Stomach (tissue), 19 donors: ENCODE measurements at regions of chr6 and their contacts with region 1.

Region 1: DNA sequence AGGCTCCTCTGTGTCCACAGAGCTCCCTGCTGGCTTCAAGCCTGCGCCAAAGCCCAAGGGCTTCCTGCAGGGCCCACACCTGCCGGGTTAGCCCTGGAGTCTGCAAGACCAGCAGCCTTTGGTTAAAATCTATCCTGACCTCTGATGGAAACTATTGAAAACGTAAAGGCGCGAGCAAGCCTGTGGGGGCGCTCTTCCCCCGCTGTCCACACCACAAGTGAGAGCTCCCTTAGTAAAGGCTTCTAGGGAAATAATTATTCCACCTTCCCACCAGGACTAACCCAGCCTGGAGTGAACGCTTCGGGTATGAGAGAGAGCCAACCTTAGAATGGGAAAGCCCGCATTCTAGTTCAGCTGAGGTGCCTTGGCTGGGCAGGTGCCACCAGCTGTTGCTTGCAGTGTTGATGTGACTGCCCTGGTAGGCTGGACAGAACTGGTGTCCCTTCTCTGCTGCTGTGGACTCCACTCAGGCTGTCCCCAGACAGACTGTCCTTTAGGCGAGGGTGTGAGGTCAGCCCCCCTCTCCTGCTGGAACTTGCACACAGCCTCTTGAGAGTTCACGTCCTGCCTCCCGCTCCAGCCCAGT is 68.7 kb downstream of the SYTL3 start:
- DNase-seq: peak; percentile 48 to 80
- H3K4me3 ChIP-seq: no peak overlapping the region
- H3K27ac ChIP-seq: peak overlapping the region in 4 of 5 donors; percentile 12 to 49 (median 30)
- H3K4me1 ChIP-seq: peaks cover 0 to 25% (median 3%) of the 10 kb centered on the region in 4 donors
- H3K27me3 ChIP-seq: no peaks in the 10 kb centered on the region
- CTCF ChIP-seq: peak in 5 of 7 experiments; percentile 16 to 45 (median 43)
- EP300 ChIP-seq: no peak
- POLR2A ChIP-seq: no peak

Region 2: DNA sequence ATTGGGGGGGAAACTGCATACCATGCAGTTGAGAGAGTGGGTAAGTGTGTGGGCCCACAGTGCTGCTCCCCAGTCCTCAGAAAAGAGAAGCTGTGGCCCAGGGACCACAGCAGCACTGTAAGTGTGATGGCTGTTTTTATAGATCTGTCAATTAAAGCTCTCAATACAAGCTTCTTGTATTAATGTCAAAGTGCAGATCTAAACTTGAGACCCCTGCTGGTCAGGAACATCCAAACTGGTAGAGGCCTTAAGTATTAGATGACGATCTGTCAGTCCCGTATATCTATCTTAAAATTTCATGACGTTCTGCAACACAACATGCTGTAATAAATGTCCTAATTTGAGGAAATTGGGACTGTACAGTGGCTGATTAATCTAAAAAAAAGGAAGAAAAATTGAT is 331.5 kb before region 1 on chr6:
- intact Hi-C with region 1: no loop called
- DNase-seq: no peak
- H3K4me3 ChIP-seq: no peak overlapping the region
- H3K27ac ChIP-seq: no peak overlapping the region
- H3K4me1 ChIP-seq: peaks cover 0 to 3% (median 0%) of the 10 kb centered on the region in 4 donors
- H3K27me3 ChIP-seq: no peaks in the 10 kb centered on the region
- CTCF ChIP-seq: no peak
- EP300 ChIP-seq: no peak
- POLR2A ChIP-seq: no peak

Region 3: GRCh38 chr6:158481690-158482473 is 236.7 kb before region 1 on chr6:
- intact Hi-C with region 1: no loop called
- DNase-seq: no peak
- H3K4me3 ChIP-seq: no peak overlapping the region
- H3K27ac ChIP-seq: no peak overlapping the region
- H3K4me1 ChIP-seq: no peaks in the 10 kb centered on the region
- H3K27me3 ChIP-seq: no peaks in the 10 kb centered on the region
- CTCF ChIP-seq: no peak
- EP300 ChIP-seq: no peak
- POLR2A ChIP-seq: no peak

Region 4: GRCh38 chr6:158584236-158584651 is 134.3 kb before region 1 on chr6:
- intact Hi-C with region 1: no loop called
- DNase-seq: no peak
- H3K4me3 ChIP-seq: no peak overlapping the region
- H3K27ac ChIP-seq: no peak overlapping the region
- H3K4me1 ChIP-seq: no peaks in the 10 kb centered on the region
- H3K27me3 ChIP-seq: no peaks in the 10 kb centered on the region
- CTCF ChIP-seq: no peak
- EP300 ChIP-seq: no peak
- POLR2A ChIP-seq: no peak

Region 5: DNA sequence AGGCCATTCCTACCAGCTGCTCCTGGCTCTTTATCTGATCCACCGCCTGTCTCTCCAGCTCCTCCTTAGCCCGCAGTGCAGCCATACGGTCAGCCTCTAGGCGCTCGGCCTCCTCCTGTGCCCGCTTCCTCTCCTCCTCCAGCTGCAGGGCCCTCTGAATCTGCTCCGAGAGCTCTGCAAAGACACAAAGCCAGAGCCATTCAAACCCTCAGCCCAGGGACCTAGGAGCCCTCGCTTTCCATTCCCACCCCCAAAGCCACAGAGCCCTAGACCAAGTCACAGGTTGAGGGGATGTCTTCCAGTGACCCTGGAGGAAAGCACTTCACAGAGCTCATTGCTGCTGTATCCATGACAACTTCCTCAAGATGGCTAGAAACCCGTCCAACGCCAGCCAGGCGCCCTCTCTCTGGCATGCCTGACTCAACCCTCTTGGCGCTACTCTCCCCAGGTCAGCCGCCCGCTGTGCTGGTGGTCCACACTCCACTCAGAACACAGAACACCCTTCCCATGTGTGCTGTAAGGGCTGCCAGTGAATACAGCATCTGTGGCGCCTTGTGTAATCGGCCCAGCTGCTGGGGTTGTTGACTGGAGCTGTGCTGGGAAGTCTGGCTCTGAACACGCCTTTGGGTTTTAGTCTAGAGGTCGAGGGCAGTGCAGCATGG is 51.3 kb after region 1 on chr6:
- intact Hi-C with region 1: loop called (anchors 10 kb)
- DNase-seq: peak in 1 of 2 donors; percentile 49
- H3K4me3 ChIP-seq: no peak overlapping the region
- H3K27ac ChIP-seq: no peak overlapping the region
- H3K4me1 ChIP-seq: peaks cover 0 to 41% (median 5%) of the 10 kb centered on the region in 4 donors
- H3K27me3 ChIP-seq: no peaks in the 10 kb centered on the region
- CTCF ChIP-seq: no peak
- EP300 ChIP-seq: no peak
- POLR2A ChIP-seq: no peak

Region 6: DNA sequence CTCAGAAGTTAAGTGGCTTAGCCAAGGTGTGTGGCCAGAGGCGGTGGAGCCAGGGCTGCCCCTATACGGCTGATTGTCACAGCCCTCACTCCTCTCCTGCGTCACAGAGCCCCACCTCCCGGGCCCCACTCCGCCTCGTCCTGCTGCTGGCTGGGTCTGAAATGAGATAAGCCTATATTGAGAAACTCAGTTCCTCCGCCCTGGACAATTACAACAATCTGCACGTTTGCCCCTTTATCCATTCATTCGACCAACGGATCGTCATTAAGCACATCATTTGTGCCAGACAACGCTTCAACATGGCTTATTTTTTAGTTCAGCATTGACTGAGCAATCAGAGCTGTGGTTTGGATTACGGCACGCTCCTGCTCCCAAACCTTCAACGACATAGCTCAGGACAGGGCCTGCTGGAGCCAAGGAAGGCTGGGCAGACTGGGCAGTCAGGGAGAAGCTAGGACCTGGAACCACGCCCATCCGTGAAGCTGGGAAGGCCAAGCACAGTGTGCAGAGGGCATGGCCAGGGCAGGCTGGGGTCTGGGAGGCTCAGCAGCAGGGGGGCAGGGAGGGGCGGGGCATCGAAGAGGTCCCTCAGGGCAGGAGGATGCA is 117.2 kb after region 1 on chr6:
- intact Hi-C with region 1: no loop called
- DNase-seq: peak; percentile 85 to 94
- H3K4me3 ChIP-seq: peak overlapping the region in 1 of 4 donors; percentile 24
- H3K27ac ChIP-seq: peak overlapping the region; percentile 71 to 87 (median 82)
- H3K4me1 ChIP-seq: peaks cover 6 to 17% (median 11%) of the 10 kb centered on the region in 4 donors
- H3K27me3 ChIP-seq: no peaks in the 10 kb centered on the region
- CTCF ChIP-seq: no peak
- EP300 ChIP-seq: no peak
- POLR2A ChIP-seq: no peak